ENCODE measurements at regions of chr12 and their contacts with region 1.

Region 1: DNA sequence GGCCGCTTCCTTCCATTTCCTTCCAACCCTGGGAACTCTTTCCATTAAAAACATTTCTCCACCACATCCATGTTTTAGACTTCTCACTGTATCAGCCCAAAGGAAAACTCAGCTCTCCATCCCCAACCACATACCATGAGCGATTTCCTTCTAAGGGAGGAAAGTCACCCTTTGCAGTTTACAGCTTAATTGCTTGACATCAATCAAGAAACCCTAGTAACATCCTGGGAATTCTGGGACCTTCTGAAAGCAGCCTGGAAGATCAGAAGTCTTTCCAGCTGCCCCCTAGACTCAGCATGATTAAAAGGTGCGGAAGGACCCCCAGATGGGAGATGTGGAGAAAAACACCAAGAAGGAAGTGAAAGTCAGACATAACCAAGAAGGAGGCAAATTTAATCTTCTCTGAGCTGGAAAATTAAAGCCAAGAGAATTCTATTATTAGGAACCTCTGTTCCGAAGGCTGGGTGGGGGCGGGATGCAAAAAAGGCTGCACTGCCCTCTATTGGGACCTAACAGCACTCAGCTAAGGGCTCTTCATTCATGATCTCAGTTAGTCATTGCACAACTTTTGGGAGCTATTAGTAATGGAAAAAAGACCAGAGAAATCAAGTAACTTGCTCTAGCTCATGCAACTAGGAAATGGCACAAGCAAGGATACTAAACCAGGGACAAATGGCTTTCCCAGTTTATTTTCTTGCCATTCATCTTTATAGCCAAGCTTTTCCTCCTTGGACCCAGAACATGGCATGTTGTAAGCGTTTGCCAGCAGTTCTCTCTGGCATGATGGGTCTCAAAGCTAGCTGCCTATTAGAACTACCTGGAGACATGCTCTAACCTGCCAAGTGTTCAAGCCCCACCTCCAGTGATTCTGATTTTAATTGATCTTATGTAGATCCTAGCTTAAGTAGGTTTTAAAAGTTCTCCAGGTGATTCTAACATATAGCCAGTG is 73.1 kb upstream of the PLXNC1 start:
- DNase-seq: peak in 1 of 2 donors; percentile 90
- H3K4me3 ChIP-seq: peak overlapping the region in 1 of 2 donors; percentile 39
- H3K27ac ChIP-seq: peak overlapping the region; percentile 89 to 94
- H3K4me1 ChIP-seq: peaks cover 0 to 21% of the 10 kb centered on the region in 2 donors
- H3K27me3 ChIP-seq: no peaks in the 10 kb centered on the region
- CTCF ChIP-seq: peak; percentile 62 to 76 (median 67)

Region 2: DNA sequence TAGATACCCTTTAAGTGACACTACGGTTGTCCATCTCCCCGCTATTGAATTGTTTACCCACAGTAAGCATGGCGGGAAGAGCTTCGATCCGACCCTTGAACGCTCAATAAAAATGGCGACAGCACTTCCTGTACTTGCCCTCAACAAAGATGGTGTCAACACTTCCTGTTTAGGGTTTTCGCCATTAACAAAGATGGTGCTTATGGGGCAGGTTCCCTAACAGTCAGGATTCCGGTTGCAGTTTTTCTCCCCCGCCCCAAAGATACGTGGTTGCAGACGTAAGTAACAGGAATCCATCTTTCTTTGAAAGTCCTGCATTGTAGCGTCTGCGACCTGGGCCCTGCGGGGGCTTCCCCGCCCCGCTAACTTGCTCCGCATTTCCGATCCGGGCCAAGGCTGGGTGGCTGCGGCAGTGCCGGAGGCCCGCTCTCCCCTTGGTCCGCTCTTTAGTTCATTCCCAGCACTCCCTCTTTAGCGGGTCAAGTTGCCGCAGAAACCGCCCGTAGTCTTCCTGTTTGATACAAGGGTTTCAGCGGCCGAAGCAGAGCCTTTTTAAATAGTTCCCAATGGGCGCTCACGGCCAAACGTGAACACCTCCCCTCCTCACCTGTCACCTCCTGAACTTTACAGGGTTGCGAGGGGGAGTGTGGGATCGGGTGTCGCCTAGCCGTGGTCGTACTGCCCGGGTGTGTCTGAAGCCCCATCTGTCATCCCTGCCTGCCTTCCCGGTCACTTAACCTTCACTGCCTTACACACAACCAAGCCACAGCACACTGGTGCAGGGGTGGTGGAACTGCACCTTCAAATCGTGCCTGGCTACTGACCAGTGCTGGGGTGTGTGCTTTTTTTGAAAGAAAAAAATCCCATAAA is 397.8 kb before region 1 on chr12 and contains the start of gene CRADD:
- intact Hi-C with region 1: loop called (anchors 5 kb)
- DNase-seq: peak; percentile 53 to 93
- H3K4me3 ChIP-seq: peak within 1 kb of the TSS; percentile 74 to 84
- H3K27ac ChIP-seq: peak within 1 kb of the TSS; percentile 98 to 99
- H3K4me1 ChIP-seq: peaks cover 0 to 24% of the 10 kb centered on the region in 2 donors
- H3K27me3 ChIP-seq: no peaks in the 10 kb centered on the region
- CTCF ChIP-seq: no peak
- total RNA-seq, gene CRADD: not detected

Region 3: DNA sequence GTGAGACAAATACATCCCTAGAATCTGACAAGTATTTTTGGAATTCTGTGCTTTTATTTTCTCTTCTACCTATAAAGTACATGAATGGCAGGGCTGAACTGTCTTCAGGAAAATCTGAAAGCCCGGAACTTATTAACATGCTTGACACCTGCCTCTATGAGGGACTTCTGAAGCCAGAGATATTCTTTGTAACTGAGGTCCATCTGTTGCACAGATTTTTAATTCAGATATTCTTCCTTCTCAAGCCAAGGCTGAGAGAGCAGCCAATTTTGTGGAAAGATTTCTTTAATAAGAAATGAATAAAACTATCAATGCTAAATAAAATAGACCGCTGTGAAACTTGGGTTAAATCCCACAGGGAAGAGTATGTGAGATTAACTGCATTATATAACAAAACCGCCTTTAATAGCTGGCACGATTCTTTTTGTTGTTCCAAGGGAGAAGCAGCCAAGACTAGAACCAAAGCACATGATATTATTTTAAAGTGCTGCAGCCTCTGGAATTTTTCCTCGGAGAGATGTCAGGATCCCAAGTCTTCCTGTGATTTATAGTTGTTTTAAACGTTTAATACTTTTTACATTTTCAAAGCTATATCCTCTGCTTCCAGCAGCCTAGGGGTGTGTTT is 249.2 kb before region 1 on chr12:
- intact Hi-C with region 1: loop called (anchors 5 kb)
- DNase-seq: no peak
- H3K4me3 ChIP-seq: no peak overlapping the region
- H3K27ac ChIP-seq: peak overlapping the region; percentile 43 to 64
- H3K4me1 ChIP-seq: peaks cover 0 to 16% of the 10 kb centered on the region in 2 donors
- H3K27me3 ChIP-seq: no peaks in the 10 kb centered on the region
- CTCF ChIP-seq: no peak

Region 4: DNA sequence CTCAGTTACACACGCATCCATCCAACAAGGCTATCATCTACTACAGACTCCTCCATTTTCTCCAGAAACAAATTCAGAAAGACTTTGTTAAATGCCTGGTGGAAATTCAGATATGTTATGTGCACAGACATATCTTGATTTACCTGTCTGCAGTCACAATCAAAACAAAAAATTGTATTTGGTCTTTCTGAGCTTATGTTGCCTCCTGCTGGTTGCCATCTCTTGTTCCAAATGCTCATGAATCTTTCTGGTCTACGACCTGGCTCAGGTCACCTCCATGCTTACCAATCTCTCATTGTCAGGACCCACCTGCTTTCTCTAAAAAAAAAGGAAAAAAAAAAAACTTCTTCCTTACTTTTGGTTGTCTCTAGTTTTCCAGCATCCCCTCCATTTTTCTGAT is 96.1 kb before region 1 on chr12:
- intact Hi-C with region 1: loop called (anchors 5 kb)
- DNase-seq: no peak
- H3K4me3 ChIP-seq: no peak overlapping the region
- H3K27ac ChIP-seq: no peak overlapping the region
- H3K4me1 ChIP-seq: peaks cover 0 to 7% of the 10 kb centered on the region in 2 donors
- H3K27me3 ChIP-seq: no peaks in the 10 kb centered on the region
- CTCF ChIP-seq: peak; percentile 10 to 40 (median 20)

Region 5: DNA sequence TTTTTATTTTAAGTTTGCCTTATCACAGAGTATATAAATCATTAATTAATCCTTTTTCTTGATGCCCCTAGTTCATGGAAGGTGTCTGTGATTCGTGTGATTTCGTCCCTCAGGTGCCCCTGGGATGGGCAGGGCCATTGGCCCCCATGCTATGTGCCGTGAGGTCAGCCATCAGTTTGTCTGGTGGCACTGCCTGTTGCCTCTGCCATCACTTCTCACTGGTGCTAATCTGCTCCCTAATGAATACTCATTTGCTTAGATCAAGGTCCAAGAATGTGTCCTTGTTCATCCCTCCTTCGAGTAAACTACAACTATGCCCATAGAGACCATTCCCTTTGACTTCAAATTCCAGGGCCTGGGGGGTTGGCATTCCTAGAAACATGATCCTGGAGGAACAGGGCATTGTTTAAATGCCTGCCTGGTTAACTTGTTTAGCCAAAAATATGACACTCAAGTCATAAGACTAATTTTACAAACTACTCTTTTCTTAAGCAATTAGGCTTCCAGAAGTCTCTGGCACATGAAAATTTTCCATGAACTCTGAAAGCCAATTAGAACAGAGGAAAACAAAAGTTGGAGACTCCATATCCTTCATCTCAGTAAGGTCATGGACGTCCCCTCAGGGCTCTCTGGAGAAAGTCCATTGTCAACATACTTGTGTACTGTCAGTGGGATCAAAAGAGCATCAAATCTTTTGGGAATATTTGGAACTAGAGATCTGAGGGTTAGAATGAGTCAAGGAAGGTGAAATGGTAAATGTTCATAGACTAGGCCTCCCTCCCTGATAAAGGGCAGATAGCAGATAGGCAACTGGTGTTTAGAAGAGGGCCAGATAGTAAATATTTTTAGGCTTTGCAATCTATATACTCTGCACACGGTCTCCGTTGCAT is 17.7 kb before region 1 on chr12:
- intact Hi-C with region 1: loop called (anchors 2 kb)
- DNase-seq: no peak
- H3K4me3 ChIP-seq: no peak overlapping the region
- H3K27ac ChIP-seq: peak overlapping the region; percentile 50 to 71
- H3K4me1 ChIP-seq: peaks cover 0 to 14% of the 10 kb centered on the region in 2 donors
- H3K27me3 ChIP-seq: no peaks in the 10 kb centered on the region
- CTCF ChIP-seq: no peak

Region 6: DNA sequence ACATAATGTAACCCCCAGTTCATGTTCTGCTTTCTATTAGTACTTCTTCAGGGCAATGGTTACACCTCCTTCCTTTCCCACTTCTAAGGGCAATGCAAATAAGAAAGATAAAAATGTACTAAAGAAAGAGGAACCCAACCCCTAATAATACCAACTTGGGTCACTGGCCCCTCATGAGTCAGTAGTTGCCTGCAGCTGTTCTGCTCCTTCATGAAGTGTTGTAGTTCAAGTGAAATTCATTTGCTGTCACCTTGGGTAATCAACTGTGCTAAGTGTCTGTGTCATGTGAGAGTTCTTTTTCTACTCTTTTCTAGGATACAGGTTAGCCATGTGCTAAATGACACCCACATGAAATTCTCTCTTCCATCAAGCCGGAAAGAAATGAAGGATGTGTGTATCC is 164.9 kb after region 1 on chr12:
- intact Hi-C with region 1: no loop called
- DNase-seq: no peak
- H3K4me3 ChIP-seq: no peak overlapping the region
- H3K27ac ChIP-seq: no peak overlapping the region
- H3K4me1 ChIP-seq: no peaks in the 10 kb centered on the region
- H3K27me3 ChIP-seq: no peaks in the 10 kb centered on the region
- CTCF ChIP-seq: no peak

Measured in ascending aorta (tissue), 2 donors.